ENCODE measurements at regions of chr9 and their contacts with region 1.

Region 1: DNA sequence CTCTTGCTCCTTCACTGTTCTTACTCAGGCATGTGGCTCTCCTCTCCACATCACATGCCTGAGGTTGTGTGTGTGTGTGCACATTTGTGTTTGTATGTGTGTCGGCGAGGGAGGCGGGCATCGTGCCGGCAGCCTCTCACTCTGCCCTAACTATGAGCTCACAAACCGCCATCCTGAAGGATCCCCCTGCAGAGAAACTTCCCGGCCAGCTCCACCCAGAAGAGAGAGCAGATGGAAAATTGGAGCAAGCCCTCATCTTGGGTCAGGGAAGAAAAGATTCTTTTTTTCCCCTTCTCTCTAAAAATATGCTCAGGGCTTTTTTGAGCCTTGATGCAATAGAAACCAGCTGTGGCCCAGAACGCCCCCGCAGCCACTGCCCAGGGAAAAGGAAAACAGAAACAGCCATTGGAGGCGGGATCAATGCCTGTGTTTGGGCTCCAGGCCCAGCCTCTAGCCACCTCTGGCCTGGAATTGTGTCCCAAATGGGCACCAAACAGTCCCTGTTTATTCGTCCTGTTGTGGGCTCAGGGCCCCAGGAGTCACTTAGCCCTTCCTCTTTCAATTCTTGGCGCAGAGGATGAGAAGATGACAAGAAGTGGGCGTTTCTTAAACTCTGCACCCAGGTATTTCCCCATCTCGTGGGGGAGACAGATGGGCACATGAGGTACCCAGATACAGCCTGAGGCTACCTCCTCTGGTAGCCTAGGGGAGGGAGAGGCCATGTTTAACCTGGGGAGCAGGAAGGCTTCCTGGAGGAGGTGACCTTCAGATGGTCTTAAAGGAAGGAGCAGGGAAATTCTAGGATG is 151.5 kb downstream of the RGS3 start:
- DNase-seq: no peak
- ATAC-seq: peak; percentile 33; the same call in 1 of the 3 replicates
- H3K4me3 ChIP-seq: no peak overlapping the region; a peak in 1 of 6 replicates
- H3K27ac ChIP-seq: no peak overlapping the region
- H3K4me1 ChIP-seq: peaks cover 82% of the 10 kb centered on the region
- H3K27me3 ChIP-seq: peaks cover 0 to 13% of the 10 kb centered on the region in 2 experiments; a peak in 2 of 5 replicates
- CTCF ChIP-seq: no peak
- EP300 ChIP-seq: no peak
- POLR2A ChIP-seq: no peak
- RAD21 ChIP-seq: no peak

Region 2: DNA sequence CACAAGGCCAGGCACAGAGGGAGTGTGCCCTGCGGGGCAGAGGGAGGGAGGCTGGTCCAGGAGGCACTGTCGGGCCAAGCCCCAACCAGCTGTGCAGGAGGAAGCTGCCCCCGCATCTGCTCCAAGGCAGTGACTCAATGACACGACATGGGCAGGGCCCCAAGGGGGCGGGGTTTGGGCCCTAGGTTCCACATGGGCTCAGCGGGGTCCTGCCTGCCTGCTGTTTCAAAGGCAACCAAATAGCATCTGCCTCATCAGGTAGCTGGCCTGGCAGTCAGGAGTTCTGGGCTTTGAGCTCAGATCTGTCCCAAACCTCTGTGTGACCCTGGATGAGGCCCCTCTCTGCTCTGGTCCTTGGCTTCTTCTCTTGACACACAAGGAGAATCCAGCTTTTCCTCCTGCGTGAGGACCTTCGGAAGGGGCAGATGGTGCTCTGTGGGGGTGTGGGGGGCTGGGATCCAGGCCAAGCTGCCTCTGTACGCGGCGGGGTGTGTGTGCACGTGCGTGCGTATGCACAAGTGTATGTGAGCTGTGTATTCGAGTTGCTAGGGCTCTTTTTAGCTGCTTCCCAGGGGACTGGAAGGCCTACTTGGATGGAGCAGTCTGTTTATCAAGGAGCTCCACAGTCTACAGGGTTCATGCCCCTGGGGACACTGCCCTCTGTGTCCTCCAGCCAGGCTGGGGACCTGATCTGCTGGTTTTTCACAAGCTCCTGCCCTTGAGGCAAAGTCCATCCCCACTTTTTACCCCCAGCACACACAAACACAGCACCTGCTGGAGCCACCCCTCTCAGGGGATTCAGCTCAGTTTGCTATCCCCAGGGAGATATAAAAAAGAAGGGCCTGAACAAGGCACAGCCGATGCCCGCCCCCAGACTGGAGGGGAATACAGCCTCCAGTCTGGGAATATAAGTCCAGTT is 12.7 kb before region 1 on chr9:
- CTCF ChIA-PET with region 1: no interaction called
- POLR2A ChIA-PET with region 1: interaction called, 10 read pairs
- in situ Hi-C with region 1: no loop called
- intact Hi-C with region 1: no loop called
- DNase-seq: peak; percentile 54
- ATAC-seq: peak; percentile 65
- H3K4me3 ChIP-seq: peak overlapping the region in 1 of 3 experiments; percentile 62; a peak in 1 of 6 replicates
- H3K27ac ChIP-seq: no peak overlapping the region
- H3K4me1 ChIP-seq: peaks cover 64% of the 10 kb centered on the region
- H3K27me3 ChIP-seq: no peaks in the 10 kb centered on the region
- CTCF ChIP-seq: 0 out of 2 replicates have a peak, but pooled peaks have one; percentile 17
- EP300 ChIP-seq: peak in 1 of 2 experiments; percentile 28; a peak in 1 of 4 replicates
- POLR2A ChIP-seq: no peak
- RAD21 ChIP-seq: no peak